ENCODE measurements at regions of chr4 and their contacts with region 1.

Region 1: GRCh38 chr4:100421361-100421978 is 96.4 kb downstream of the EMCN start:
- DNase-seq: peak in 3 of 9 donors; percentile 1 to 10 (median 1)
- ATAC-seq: no peak
- H3K4me3 ChIP-seq: no peak overlapping the region
- H3K4me3 Mint-ChIP-seq: no peak overlapping the region
- H3K27ac ChIP-seq: no peak overlapping the region
- H3K27ac Mint-ChIP-seq: no peak overlapping the region
- H3K4me1 ChIP-seq: no peaks in the 10 kb centered on the region
- H3K4me1 Mint-ChIP-seq: peaks cover 0 to 4% (median 0%) of the 10 kb centered on the region in 7 donors
- H3K27me3 ChIP-seq: no peaks in the 10 kb centered on the region
- H3K27me3 Mint-ChIP-seq: peaks cover 0 to 9% (median 0%) of the 10 kb centered on the region in 5 donors

Region 2: DNA sequence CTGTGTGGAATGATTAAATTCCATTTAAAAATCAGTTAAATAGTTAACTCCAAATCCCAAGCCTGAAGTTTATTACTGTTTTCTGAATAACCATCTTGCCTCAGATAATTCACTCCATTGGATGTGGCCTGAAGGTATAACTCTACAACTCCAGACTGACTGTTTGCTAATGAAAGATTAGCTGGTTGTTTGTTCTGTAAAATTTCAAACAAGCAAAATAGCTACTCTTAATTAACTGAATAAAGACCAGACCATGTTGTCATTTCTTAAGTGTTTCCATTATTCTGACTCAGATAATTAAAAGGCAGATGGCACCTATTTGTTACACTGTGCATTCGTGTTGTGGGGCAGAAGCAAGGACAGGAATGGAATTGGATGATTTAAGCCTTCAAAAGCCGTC is 152.7 kb before region 1 on chr4:
- CTCF ChIA-PET with region 1: no interaction called
- POLR2A ChIA-PET with region 1: no interaction called
- intact Hi-C with region 1: no loop called
- DNase-seq: no peak
- ATAC-seq: no peak
- H3K4me3 ChIP-seq: no peak overlapping the region
- H3K4me3 Mint-ChIP-seq: no peak overlapping the region
- H3K27ac ChIP-seq: no peak overlapping the region
- H3K27ac Mint-ChIP-seq: no peak overlapping the region
- H3K4me1 ChIP-seq: no peaks in the 10 kb centered on the region
- H3K4me1 Mint-ChIP-seq: no peaks in the 10 kb centered on the region
- H3K27me3 ChIP-seq: no peaks in the 10 kb centered on the region
- H3K27me3 Mint-ChIP-seq: peaks cover 0 to 2% (median 0%) of the 10 kb centered on the region in 5 donors

Region 3: GRCh38 chr4:100635899-100636298 is 214.4 kb after region 1 on chr4:
- CTCF ChIA-PET with region 1: no interaction called
- POLR2A ChIA-PET with region 1: no interaction called
- intact Hi-C with region 1: loop called in 1 of 2 experiments (anchors 2 kb)
- DNase-seq: no peak
- ATAC-seq: no peak
- H3K4me3 ChIP-seq: no peak overlapping the region
- H3K4me3 Mint-ChIP-seq: no peak overlapping the region
- H3K27ac ChIP-seq: no peak overlapping the region
- H3K27ac Mint-ChIP-seq: no peak overlapping the region
- H3K4me1 ChIP-seq: no peaks in the 10 kb centered on the region
- H3K4me1 Mint-ChIP-seq: no peaks in the 10 kb centered on the region
- H3K27me3 ChIP-seq: no peaks in the 10 kb centered on the region
- H3K27me3 Mint-ChIP-seq: peaks cover 3 to 12% (median 6%) of the 10 kb centered on the region in 5 donors

Region 4: GRCh38 chr4:100742045-100742444 is 320.6 kb after region 1 on chr4:
- CTCF ChIA-PET with region 1: no interaction called
- POLR2A ChIA-PET with region 1: no interaction called
- intact Hi-C with region 1: loop called (anchors 1 kb)
- DNase-seq: peak in 3 of 9 donors; percentile 2 to 4 (median 3)
- ATAC-seq: no peak
- H3K4me3 ChIP-seq: no peak overlapping the region
- H3K4me3 Mint-ChIP-seq: no peak overlapping the region
- H3K27ac ChIP-seq: no peak overlapping the region
- H3K27ac Mint-ChIP-seq: no peak overlapping the region
- H3K4me1 ChIP-seq: no peaks in the 10 kb centered on the region
- H3K4me1 Mint-ChIP-seq: peaks cover 0 to 1% (median 0%) of the 10 kb centered on the region in 7 donors
- H3K27me3 ChIP-seq: no peaks in the 10 kb centered on the region
- H3K27me3 Mint-ChIP-seq: peaks cover 0 to 7% (median 5%) of the 10 kb centered on the region in 5 donors

Region 5: DNA sequence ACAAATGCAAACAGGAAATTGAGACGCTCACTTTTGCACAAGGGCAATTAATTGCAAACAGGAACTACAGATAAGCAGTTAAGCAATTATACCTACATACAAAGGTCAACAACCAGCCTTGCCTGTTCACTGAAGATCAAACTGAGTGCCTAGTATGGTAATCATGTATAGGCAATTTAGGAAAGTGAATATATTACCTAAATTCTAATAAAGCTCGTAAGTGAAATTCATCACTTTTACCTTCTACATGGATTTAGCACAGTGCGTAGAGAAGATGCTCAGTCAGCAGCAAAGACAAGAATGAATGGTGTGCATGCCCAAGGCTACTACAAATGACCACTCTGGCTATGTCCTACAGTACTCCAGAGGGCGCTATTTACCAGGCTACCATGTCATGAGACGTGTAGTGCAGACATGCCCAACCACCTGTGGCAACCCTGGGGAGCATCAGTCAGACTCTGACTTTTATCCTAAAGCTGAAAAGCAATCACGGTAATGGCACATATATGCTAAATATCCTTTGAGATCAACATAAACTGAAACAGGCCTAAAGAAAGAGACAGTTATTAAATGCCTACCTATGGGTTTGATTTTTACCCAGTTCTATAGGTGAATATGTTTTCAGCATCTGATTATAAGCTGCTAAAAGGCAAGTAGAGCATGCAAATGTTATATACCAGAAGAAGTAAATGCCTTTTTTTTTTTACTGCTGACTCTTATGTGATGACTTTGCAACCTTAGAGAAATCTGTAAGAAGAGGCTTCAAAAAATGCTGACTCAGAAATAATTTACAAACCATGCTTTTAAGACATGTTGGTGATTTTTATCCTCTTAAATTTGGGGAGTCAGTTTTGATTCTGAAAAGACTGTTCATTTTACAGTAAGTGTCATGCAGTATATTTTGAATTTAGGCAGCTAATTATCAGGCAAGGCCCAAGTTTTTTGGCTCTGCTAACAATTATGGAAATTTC is 747.9 kb after region 1 on chr4:
- CTCF ChIA-PET with region 1: no interaction called
- POLR2A ChIA-PET with region 1: no interaction called
- intact Hi-C with region 1: loop called in 1 of 2 experiments (anchors 10 kb)
- DNase-seq: peak; percentile 9 to 64 (median 54)
- ATAC-seq: peak; percentile 96
- H3K4me3 ChIP-seq: no peak overlapping the region
- H3K4me3 Mint-ChIP-seq: no peak overlapping the region
- H3K27ac ChIP-seq: no peak overlapping the region
- H3K27ac Mint-ChIP-seq: no peak overlapping the region
- H3K4me1 ChIP-seq: no peaks in the 10 kb centered on the region
- H3K4me1 Mint-ChIP-seq: peaks cover 0 to 6% (median 3%) of the 10 kb centered on the region in 7 donors
- H3K27me3 ChIP-seq: no peaks in the 10 kb centered on the region
- H3K27me3 Mint-ChIP-seq: no peaks in the 10 kb centered on the region

Region 6: GRCh38 chr4:102263011-102263787 is 1841.7 kb after region 1 on chr4:
- CTCF ChIA-PET with region 1: no interaction called
- POLR2A ChIA-PET with region 1: no interaction called
- intact Hi-C with region 1: loop called in 1 of 2 experiments (anchors 2 kb)
- DNase-seq: peak in 5 of 9 donors; percentile 0 to 45 (median 14)
- ATAC-seq: peak; percentile 67
- H3K4me3 ChIP-seq: no peak overlapping the region
- H3K4me3 Mint-ChIP-seq: no peak overlapping the region
- H3K27ac ChIP-seq: no peak overlapping the region
- H3K27ac Mint-ChIP-seq: peak overlapping the region in 2 of 9 donors; percentile 7 to 69
- H3K4me1 ChIP-seq: no peaks in the 10 kb centered on the region
- H3K4me1 Mint-ChIP-seq: peaks cover 0 to 13% (median 4%) of the 10 kb centered on the region in 7 donors
- H3K27me3 ChIP-seq: no peaks in the 10 kb centered on the region
- H3K27me3 Mint-ChIP-seq: no peaks in the 10 kb centered on the region